ENCODE measurements at regions of chrX and their contacts with region 1.

Region 1: GRCh38 chrX:149286940-149287349 is 218.2 kb downstream of the IDS start:
- DNase-seq: peak; percentile 51
- H3K4me3 ChIP-seq: no peak overlapping the region
- H3K27ac ChIP-seq: no peak overlapping the region
- H3K4me1 ChIP-seq: no peaks in the 10 kb centered on the region
- H3K27me3 ChIP-seq: no peaks in the 10 kb centered on the region
- CTCF ChIP-seq: peak; percentile 32 to 65
- POLR2A ChIP-seq: no peak

Region 2: DNA sequence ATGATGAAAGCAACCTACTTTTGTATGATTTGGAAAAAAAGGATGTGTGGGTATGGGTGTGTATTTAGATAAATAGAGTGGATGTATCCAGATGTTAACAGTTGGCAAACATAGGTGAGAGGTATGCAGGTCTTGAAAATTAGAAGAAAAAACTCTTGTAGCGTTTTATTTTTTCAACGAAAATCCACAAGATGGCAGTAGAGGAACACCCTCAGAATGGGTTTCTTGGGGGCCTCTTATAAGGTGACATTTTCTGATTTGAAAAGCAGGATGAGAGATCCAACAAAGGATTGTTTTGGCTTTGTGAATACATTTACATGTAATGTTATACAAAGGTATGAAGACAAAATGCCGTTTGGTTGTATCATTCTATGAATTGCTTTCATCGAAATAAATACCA is 1237.5 kb before region 1 on chrX:
- CTCF ChIA-PET with region 1: interaction called, 5 read pairs
- POLR2A ChIA-PET with region 1: no interaction called
- dilution Hi-C with region 1: no loop called
- intact Hi-C with region 1: loop called (anchors 1 kb)
- DNase-seq: peak; percentile 36
- H3K4me3 ChIP-seq: no peak overlapping the region
- H3K27ac ChIP-seq: no peak overlapping the region
- H3K4me1 ChIP-seq: no peaks in the 10 kb centered on the region
- H3K27me3 ChIP-seq: no peaks in the 10 kb centered on the region
- CTCF ChIP-seq: peak in 1 of 2 donors; percentile 10
- POLR2A ChIP-seq: no peak

Region 3: GRCh38 chrX:148133105-148133725 is 1153.7 kb before region 1 on chrX:
- CTCF ChIA-PET with region 1: interaction called, 26 read pairs
- POLR2A ChIA-PET with region 1: no interaction called
- dilution Hi-C with region 1: no loop called
- intact Hi-C with region 1: no loop called
- DNase-seq: peak; percentile 14
- H3K4me3 ChIP-seq: no peak overlapping the region
- H3K27ac ChIP-seq: no peak overlapping the region
- H3K4me1 ChIP-seq: no peaks in the 10 kb centered on the region
- H3K27me3 ChIP-seq: no peaks in the 10 kb centered on the region
- CTCF ChIP-seq: no peak
- POLR2A ChIP-seq: no peak

Region 4: GRCh38 chrX:148530464-148531077 is 756.4 kb before region 1 on chrX:
- CTCF ChIA-PET with region 1: interaction called, 6 read pairs
- POLR2A ChIA-PET with region 1: no interaction called
- dilution Hi-C with region 1: no loop called
- intact Hi-C with region 1: loop called (anchors 5 kb)
- DNase-seq: peak; percentile 10
- H3K4me3 ChIP-seq: no peak overlapping the region
- H3K27ac ChIP-seq: no peak overlapping the region
- H3K4me1 ChIP-seq: no peaks in the 10 kb centered on the region
- H3K27me3 ChIP-seq: no peaks in the 10 kb centered on the region
- CTCF ChIP-seq: peak; percentile 23 to 29
- POLR2A ChIP-seq: no peak

Region 5: DNA sequence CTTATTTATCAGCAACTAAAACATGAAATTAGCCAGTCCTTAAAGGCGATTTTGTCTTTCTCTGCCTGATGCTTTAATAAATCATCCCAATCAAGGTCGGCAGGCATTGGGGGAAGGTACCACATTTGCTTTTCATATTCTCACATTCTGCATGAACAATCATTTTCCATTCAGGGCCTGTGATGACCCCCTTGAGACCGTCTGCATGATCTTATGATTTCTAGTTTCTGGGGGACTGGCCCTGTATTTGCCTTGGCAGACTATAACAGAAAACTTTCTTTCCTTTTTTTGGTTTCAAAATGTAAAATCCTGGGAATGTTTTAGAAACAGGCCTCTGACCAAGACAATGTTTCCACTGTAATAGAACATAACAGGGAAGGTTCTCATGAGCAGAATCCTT is 78.6 kb before region 1 on chrX:
- CTCF ChIA-PET with region 1: no interaction called
- POLR2A ChIA-PET with region 1: no interaction called
- dilution Hi-C with region 1: no loop called
- intact Hi-C with region 1: no loop called
- DNase-seq: no peak
- H3K4me3 ChIP-seq: no peak overlapping the region
- H3K27ac ChIP-seq: no peak overlapping the region
- H3K4me1 ChIP-seq: no peaks in the 10 kb centered on the region
- H3K27me3 ChIP-seq: no peaks in the 10 kb centered on the region
- CTCF ChIP-seq: no peak
- POLR2A ChIP-seq: no peak